ENCODE measurements at regions of chr21 and their contacts with region 1.

Region 1: GRCh38 chr21:44485254-44485793 is 30.0 kb downstream of the LRRC3 start:
- DNase-seq: peak; percentile 60 to 87
- H3K4me3 ChIP-seq: peak overlapping the region; percentile 64 to 93 (median 67)
- H3K27ac ChIP-seq: peak overlapping the region; percentile 34; the same call in 1 of the 2 replicates
- H3K4me1 ChIP-seq: peaks cover 0 to 3% (median 1%) of the 10 kb centered on the region in 4 experiments; a peak in 3 of 7 replicates
- H3K27me3 ChIP-seq: no peaks in the 10 kb centered on the region; a peak in 1 of 7 replicates
- CTCF ChIP-seq: peak; percentile 48 to 74 (median 66)
- EP300 ChIP-seq: no peak
- POLR2A ChIP-seq: peak in 1 of 2 experiments; percentile 83; a peak in 2 of 3 replicates
- RAD21 ChIP-seq: peak; percentile 20 to 35; a peak in 3 of 4 replicates

Region 2: GRCh38 chr21:44344541-44345328 is 140.6 kb before region 1 on chr21:
- CTCF ChIA-PET with region 1: interaction called, 10 read pairs
- POLR2A ChIA-PET with region 1: interaction called, 3 read pairs
- DNase-seq: no peak
- H3K4me3 ChIP-seq: no peak overlapping the region
- H3K27ac ChIP-seq: no peak overlapping the region
- H3K4me1 ChIP-seq: no peaks in the 10 kb centered on the region; a peak in 2 of 7 replicates
- H3K27me3 ChIP-seq: peaks cover 6 to 11% (median 9%) of the 10 kb centered on the region in 4 experiments; a peak in 6 of 7 replicates
- CTCF ChIP-seq: no peak
- EP300 ChIP-seq: no peak
- POLR2A ChIP-seq: no peak
- RAD21 ChIP-seq: no peak

Region 3: GRCh38 chr21:44444286-44444931 is 40.9 kb before region 1 on chr21:
- CTCF ChIA-PET with region 1: interaction called, 20 read pairs
- POLR2A ChIA-PET with region 1: interaction called, 5 read pairs
- DNase-seq: peak in 1 of 2 experiments; percentile 85
- H3K4me3 ChIP-seq: no peak overlapping the region
- H3K27ac ChIP-seq: no peak overlapping the region
- H3K4me1 ChIP-seq: no peaks in the 10 kb centered on the region; a peak in 1 of 7 replicates
- H3K27me3 ChIP-seq: no peaks in the 10 kb centered on the region
- CTCF ChIP-seq: peak in 2 of 3 experiments; percentile 75 to 93; a peak in 3 of 4 replicates
- EP300 ChIP-seq: no peak
- POLR2A ChIP-seq: no peak
- RAD21 ChIP-seq: peak; percentile 57 to 62

Region 4: DNA sequence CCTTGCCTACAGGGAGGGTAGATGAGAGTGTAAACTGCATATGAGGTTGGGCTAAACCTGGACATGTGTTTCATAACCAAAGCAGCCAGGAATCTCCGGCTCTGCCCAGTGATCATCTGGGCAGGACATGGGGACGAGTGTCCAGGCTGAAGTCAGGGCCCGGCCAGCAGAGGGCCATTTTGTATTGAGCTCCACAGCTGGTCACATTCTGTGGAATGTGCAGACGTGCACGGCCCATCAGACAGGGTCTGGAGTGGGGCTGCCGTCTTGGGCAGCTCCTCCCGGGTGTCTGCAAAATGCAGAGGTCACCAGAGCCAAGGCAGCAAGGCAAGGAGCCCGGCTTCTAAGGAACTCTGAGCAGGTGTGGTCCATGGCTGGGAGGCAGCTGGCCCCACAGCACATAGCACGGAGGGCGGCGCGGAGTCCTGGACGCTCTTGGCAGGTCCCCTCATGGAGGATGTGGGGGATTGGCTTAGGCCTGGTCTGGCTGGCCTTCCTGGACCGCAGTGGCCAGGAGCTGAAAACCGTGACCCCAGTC is 23.8 kb before region 1 on chr21:
- CTCF ChIA-PET with region 1: interaction called, 13 read pairs
- POLR2A ChIA-PET with region 1: interaction called, 4 read pairs
- DNase-seq: no peak
- H3K4me3 ChIP-seq: no peak overlapping the region
- H3K27ac ChIP-seq: no peak overlapping the region
- H3K4me1 ChIP-seq: peaks cover 0 to 2% (median 0%) of the 10 kb centered on the region in 4 experiments; a peak in 2 of 7 replicates
- H3K27me3 ChIP-seq: peaks cover 0 to 4% (median 0%) of the 10 kb centered on the region in 4 experiments; a peak in 2 of 7 replicates
- CTCF ChIP-seq: peak in 1 of 3 experiments; percentile 4; a peak in 1 of 4 replicates
- EP300 ChIP-seq: no peak
- POLR2A ChIP-seq: no peak
- RAD21 ChIP-seq: no peak

Region 5: GRCh38 chr21:44497703-44498126 is 12.4 kb after region 1 on chr21:
- CTCF ChIA-PET with region 1: interaction called, 7 read pairs
- POLR2A ChIA-PET with region 1: interaction called, 14 read pairs
- DNase-seq: no peak
- H3K4me3 ChIP-seq: no peak overlapping the region
- H3K27ac ChIP-seq: no peak overlapping the region
- H3K4me1 ChIP-seq: peaks cover 0 to 21% (median 8%) of the 10 kb centered on the region in 4 experiments; a peak in 5 of 7 replicates
- H3K27me3 ChIP-seq: no peaks in the 10 kb centered on the region; a peak in 1 of 7 replicates
- CTCF ChIP-seq: no peak
- EP300 ChIP-seq: no peak
- POLR2A ChIP-seq: no peak
- RAD21 ChIP-seq: no peak